ENCODE measurements at regions of chr18 and their contacts with region 1.

Region 1: GRCh38 chr18:13982136-13982535 is 66.8 kb upstream of the MC2R start:
- DNase-seq: no peak
- ATAC-seq: no peak
- H3K4me3 Mint-ChIP-seq: no peak overlapping the region
- H3K27ac Mint-ChIP-seq: no peak overlapping the region
- H3K4me1 Mint-ChIP-seq: no peaks in the 10 kb centered on the region
- H3K27me3 Mint-ChIP-seq: peaks cover 10% of the 10 kb centered on the region

Region 2: GRCh38 chr18:13934676-13935075 is 47.5 kb before region 1 on chr18:
- CTCF ChIA-PET with region 1: no interaction called
- POLR2A ChIA-PET with region 1: no interaction called
- intact Hi-C with region 1: loop called in 1 of 2 experiments (anchors 10 kb)
- DNase-seq: no peak
- ATAC-seq: no peak
- H3K4me3 Mint-ChIP-seq: no peak overlapping the region
- H3K27ac Mint-ChIP-seq: no peak overlapping the region
- H3K4me1 Mint-ChIP-seq: no peaks in the 10 kb centered on the region
- H3K27me3 Mint-ChIP-seq: no peaks in the 10 kb centered on the region

Measured in activated CD4-positive, alpha-beta T cell treated with anti-CD3 and anti-CD28 coated beads for 36 hours (primary cell).